Sigmoid colon (tissue), 7 donors: ENCODE measurements at regions of chr16 and their contacts with region 1.

Region 1: GRCh38 chr16:27455700-27456099 is 53.7 kb downstream of the IL21R start:
- DNase-seq: no peak
- H3K4me3 ChIP-seq: no peak overlapping the region
- H3K27ac ChIP-seq: no peak overlapping the region
- H3K4me1 ChIP-seq: no peaks in the 10 kb centered on the region
- H3K27me3 ChIP-seq: peaks cover 0 to 3% (median 1%) of the 10 kb centered on the region in 3 donors
- CTCF ChIP-seq: no peak
- EP300 ChIP-seq: no peak
- POLR2A ChIP-seq: no peak

Region 2: DNA sequence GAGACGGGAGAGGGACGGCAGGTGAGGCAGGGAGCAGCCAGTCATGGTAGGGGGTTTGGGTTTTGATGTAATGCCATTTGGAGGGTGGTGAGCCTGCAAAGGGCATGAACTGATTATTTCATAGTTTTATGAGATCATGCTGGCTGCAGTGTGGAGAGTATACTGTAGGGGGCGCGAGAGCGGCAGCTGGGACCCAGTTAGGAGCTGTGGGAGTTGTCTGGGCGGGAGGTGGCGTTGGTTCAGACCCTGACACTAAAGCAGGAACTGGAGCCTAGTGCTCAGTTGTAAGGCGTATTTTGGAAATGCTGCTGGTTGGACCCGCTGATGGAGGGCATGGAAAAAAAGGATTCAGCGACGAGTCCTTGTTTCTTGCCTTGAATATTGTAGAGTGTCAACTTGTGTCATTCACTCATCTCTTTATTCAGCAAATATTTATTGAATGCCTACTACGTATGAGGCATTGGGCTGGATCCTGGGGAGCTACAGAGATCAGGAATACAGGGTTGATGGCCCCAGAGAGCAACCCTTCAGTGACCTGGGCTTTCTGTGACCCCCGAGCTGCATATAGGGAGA is 276.1 kb before region 1 on chr16:
- intact Hi-C with region 1: loop called (anchors 2 kb)
- DNase-seq: peak; percentile 93
- H3K4me3 ChIP-seq: no peak overlapping the region
- H3K27ac ChIP-seq: no peak overlapping the region
- H3K4me1 ChIP-seq: no peaks in the 10 kb centered on the region
- H3K27me3 ChIP-seq: no peaks in the 10 kb centered on the region
- CTCF ChIP-seq: peak; percentile 86 to 97 (median 93)
- EP300 ChIP-seq: no peak
- POLR2A ChIP-seq: no peak

Region 3: GRCh38 chr16:27646806-27647205 is 191.1 kb after region 1 on chr16:
- intact Hi-C with region 1: no loop called
- DNase-seq: no peak
- H3K4me3 ChIP-seq: no peak overlapping the region
- H3K27ac ChIP-seq: no peak overlapping the region
- H3K4me1 ChIP-seq: no peaks in the 10 kb centered on the region
- H3K27me3 ChIP-seq: no peaks in the 10 kb centered on the region
- CTCF ChIP-seq: no peak
- EP300 ChIP-seq: no peak
- POLR2A ChIP-seq: no peak